ENCODE measurements at regions of chr5 and their contacts with region 1.

Region 1: DNA sequence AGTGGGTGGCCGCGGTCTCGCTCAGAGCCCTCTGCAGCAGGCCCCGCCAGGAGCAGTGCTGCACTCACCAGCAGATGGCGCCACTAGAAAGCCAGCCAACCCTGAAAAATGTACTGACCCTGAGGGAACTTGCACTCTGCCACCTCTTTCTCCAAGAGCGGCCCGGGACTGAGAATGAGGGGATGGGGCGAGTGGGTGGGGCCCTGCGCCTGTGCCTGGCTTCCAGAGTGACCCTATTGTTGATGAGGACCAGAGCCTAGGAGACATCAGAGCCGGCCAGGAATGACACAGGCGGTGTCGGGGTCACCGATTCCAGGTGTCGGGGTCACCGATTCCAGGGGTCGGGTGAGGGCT is 2.9 kb upstream of the IL17B start:
- DNase-seq: peak; percentile 87
- H3K4me3 Mint-ChIP-seq: no peak overlapping the region
- H3K27ac Mint-ChIP-seq: no peak overlapping the region
- H3K4me1 Mint-ChIP-seq: no peaks in the 10 kb centered on the region
- H3K27me3 Mint-ChIP-seq: no peaks in the 10 kb centered on the region

Region 2: GRCh38 chr5:149317281-149318048 is 64.5 kb before region 1 on chr5:
- CTCF ChIA-PET with region 1: interaction called, 13 read pairs
- intact Hi-C with region 1: no loop called
- DNase-seq: peak; percentile 58
- H3K4me3 Mint-ChIP-seq: no peak overlapping the region
- H3K27ac Mint-ChIP-seq: no peak overlapping the region
- H3K4me1 Mint-ChIP-seq: no peaks in the 10 kb centered on the region
- H3K27me3 Mint-ChIP-seq: no peaks in the 10 kb centered on the region

Region 3: DNA sequence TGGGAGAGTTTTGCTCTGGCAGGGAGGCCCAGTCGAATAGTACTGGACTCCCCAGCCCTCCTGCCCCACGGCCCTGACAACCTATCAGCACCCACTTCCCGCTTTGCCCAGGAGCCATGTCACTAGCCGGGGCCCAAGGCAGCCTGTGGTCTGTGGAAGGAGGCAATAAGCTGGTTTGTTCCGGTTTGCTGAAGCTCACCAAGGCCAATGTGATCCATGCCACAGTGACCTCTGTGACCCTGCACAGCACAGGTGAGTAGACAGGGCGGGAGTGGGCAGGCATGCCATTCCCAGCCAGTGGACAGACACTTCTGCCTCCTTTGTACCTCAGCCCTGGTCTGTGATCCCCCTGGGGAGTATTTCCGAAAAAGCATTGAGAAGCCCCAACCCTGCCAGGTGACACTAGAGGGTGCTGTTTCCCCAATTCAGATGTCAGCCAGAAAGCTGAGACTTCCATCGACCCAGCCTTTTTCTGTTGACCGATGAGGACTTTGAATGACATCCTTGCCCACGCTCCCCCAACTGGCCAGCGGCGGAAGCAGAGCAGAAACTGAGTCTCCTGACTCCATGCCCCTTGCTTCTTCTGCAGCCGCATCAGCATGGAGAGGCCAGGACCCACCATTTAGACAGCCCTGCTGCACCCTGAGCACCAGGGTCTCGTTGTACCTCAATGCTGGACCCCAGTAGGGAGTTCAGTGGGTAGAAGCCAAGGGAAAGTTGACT is 14.6 kb before region 1 on chr5:
- CTCF ChIA-PET with region 1: interaction called, 80 read pairs
- intact Hi-C with region 1: no loop called
- DNase-seq: peak; percentile 72
- H3K4me3 Mint-ChIP-seq: no peak overlapping the region
- H3K27ac Mint-ChIP-seq: no peak overlapping the region
- H3K4me1 Mint-ChIP-seq: peaks cover 10% of the 10 kb centered on the region
- H3K27me3 Mint-ChIP-seq: no peaks in the 10 kb centered on the region

Region 4: DNA sequence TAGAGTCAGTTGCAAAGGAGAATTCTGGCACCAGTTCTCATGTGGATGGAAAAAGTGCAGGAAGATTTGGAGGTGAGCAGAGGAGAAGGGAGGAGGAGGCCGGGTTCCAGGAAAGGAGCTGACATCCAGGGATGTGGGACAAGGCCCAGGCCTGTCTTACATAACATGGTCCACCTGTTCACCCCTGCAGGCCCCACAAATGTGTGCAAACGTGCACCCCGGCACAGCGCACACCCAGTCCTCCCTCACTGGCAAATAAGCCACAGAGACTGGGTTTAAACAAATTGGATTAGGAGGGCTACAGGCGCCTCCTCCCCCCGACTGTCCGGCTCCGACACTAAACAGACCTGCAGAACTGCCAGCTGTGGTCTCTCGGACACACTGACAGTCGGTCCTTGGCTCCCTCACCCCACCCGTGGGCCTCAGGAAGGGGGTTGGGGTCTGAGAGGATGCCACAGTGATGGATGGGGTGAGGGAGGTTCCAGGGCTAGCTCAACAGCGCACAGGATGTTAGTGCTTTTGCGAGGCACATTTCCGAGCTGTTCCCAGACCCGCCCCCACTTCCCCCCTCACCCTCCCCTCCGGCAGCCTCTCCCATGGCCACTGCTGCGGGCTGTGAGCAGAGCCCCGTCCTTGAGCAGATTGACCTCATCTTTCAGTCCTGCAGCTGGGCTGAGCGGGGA is 40.5 kb after region 1 on chr5:
- CTCF ChIA-PET with region 1: interaction called, 10 read pairs
- intact Hi-C with region 1: no loop called
- DNase-seq: peak; percentile 38
- H3K4me3 Mint-ChIP-seq: no peak overlapping the region
- H3K27ac Mint-ChIP-seq: no peak overlapping the region
- H3K4me1 Mint-ChIP-seq: peaks cover 14% of the 10 kb centered on the region
- H3K27me3 Mint-ChIP-seq: no peaks in the 10 kb centered on the region

Region 5: DNA sequence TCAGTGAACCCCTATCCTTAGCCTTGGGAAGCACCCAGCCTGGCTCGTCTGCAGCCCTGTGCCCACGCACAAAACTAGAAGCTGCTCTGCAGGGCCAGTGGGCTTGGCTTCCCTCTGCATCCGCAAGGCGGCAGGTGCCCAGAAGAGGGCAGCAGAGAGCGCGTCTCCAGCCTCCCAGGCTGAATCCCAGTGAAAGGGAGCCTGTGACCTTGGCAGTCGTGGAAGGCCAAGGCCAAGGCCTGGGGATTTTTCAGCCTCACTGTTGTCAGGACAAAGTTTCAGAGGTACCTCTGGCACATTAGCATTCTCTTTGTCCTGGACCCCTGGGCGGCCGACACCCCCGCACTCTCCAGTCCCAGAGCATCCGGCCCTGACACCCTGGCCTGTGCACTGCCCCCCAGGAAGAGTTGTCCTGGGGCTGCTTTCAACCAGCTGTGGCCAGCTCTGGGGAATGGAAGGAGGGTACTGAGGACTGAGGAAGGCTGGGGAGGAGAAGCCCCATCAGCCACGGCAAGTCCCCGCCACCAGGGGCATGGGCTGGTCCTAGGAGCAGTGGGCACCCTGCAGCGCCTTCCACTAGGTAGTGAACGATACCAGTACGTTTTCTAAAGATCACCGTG is 60.7 kb after region 1 on chr5:
- CTCF ChIA-PET with region 1: interaction called, 25 read pairs
- intact Hi-C with region 1: no loop called
- DNase-seq: peak; percentile 82
- H3K4me3 Mint-ChIP-seq: no peak overlapping the region
- H3K27ac Mint-ChIP-seq: no peak overlapping the region
- H3K4me1 Mint-ChIP-seq: peaks cover 18% of the 10 kb centered on the region
- H3K27me3 Mint-ChIP-seq: no peaks in the 10 kb centered on the region

Region 6: GRCh38 chr5:149561848-149562247 is 179.9 kb after region 1 on chr5:
- CTCF ChIA-PET with region 1: interaction called, 29 read pairs
- intact Hi-C with region 1: loop called (anchors 1 kb)
- DNase-seq: peak; percentile 20
- H3K4me3 Mint-ChIP-seq: no peak overlapping the region
- H3K27ac Mint-ChIP-seq: peak overlapping the region; percentile 70
- H3K4me1 Mint-ChIP-seq: peaks cover 32% of the 10 kb centered on the region
- H3K27me3 Mint-ChIP-seq: no peaks in the 10 kb centered on the region

Region 7: DNA sequence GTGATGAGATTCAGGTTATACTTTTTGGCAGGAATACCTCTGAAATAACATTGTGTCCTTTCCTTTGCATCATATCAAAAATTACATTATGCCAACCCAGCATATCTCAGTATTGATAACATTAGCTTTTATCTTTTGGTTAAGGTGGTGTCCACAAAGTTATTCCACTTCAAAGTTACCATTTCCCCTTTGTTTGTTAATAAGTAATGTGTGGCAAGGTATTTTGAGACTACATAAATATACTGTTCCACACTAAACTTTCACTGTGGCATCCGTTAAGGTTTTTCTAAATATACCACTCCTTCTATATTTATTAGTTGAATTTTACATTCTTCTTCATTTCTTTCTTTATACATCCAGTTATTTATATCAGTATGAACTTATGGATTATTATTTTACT is 185.3 kb after region 1 on chr5:
- CTCF ChIA-PET with region 1: interaction called, 29 read pairs
- intact Hi-C with region 1: loop called (anchors 1 kb)
- DNase-seq: no peak
- H3K4me3 Mint-ChIP-seq: no peak overlapping the region
- H3K27ac Mint-ChIP-seq: no peak overlapping the region
- H3K4me1 Mint-ChIP-seq: peaks cover 15% of the 10 kb centered on the region
- H3K27me3 Mint-ChIP-seq: no peaks in the 10 kb centered on the region

Region 8: DNA sequence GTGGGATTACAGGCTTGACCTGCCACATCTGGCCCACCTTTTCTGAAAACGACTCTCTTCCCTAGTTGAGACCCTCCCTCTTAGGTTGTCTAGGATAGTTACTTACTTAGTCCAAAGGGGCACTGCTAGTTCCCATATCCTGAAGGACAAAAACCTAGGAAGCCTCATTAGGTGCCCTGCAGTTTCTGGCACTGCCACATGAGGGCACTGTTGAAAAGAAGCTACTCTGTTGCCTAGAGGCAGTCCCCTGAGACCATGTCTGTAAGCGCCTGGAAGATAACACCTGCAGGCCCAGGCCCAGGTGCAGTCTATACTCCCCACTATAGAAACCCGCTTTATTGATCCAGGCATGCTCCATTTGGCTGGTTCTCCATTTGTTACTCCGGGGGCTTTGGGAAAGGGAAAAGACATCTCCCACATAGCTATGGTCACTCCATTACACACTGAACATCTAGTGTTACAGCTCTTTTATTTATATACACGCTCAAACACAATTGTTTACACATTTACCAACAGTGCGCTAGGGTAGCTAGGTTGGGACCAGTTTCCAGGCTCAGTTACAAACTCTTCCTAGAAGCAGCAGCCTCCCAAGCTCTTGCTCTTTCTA is 274.7 kb after region 1 on chr5:
- CTCF ChIA-PET with region 1: no interaction called
- intact Hi-C with region 1: no loop called
- DNase-seq: peak; percentile 67
- H3K4me3 Mint-ChIP-seq: no peak overlapping the region
- H3K27ac Mint-ChIP-seq: no peak overlapping the region
- H3K4me1 Mint-ChIP-seq: no peaks in the 10 kb centered on the region
- H3K27me3 Mint-ChIP-seq: peaks cover 5% of the 10 kb centered on the region